Activated CD4-positive, alpha-beta memory T cell treated with anti-CD3 and anti-CD28 coated beads for 36 hours (primary cell): ENCODE measurements at regions of chr14 and their contacts with region 1.

Region 1: GRCh38 chr14:70907176-70907995 is at the start of gene PCNX1:
- DNase-seq: peak; percentile 90
- H3K4me3 Mint-ChIP-seq: peak within 1 kb of the TSS; percentile 97
- H3K27ac Mint-ChIP-seq: peak within 1 kb of the TSS; percentile 86
- H3K4me1 Mint-ChIP-seq: peaks cover 72% of the 10 kb centered on the region
- H3K27me3 Mint-ChIP-seq: no peaks in the 10 kb centered on the region
- total RNA-seq, gene PCNX1: 39.2 to 44.4 TPM

Region 2: DNA sequence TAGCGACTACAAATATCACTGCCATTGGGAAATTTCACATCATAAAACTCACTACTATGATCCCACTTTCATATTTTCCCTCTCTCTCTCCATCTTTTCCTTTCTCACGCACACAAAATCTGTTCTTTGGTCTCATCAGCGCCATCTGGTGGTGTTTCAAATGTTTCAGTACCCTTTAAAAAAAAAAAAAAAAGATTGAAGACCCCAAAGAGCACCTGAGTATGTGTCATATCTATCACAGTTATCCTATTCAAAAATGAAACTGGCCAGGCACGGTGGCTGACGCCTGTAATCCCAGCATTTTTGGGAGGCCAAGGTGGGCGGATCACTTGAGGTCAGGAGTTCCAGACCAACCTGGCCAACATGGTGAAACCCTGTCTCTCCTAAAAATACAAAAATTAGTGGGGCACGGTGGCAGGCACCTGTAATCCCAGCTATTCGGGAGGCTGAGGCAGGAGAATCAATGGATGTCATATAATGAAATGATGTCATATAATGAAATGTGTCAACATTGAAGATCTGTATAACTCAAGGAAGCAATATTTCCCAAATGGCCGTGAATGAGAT is 193.2 kb before region 1 on chr14:
- CTCF ChIA-PET with region 1: no interaction called
- POLR2A ChIA-PET with region 1: no interaction called
- intact Hi-C with region 1: no loop called
- DNase-seq: peak; percentile 32
- H3K4me3 Mint-ChIP-seq: no peak overlapping the region
- H3K27ac Mint-ChIP-seq: no peak overlapping the region
- H3K4me1 Mint-ChIP-seq: peaks cover 3% of the 10 kb centered on the region
- H3K27me3 Mint-ChIP-seq: no peaks in the 10 kb centered on the region

Region 3: GRCh38 chr14:70735043-70735442 is 172.3 kb before region 1 on chr14:
- CTCF ChIA-PET with region 1: no interaction called
- POLR2A ChIA-PET with region 1: no interaction called
- intact Hi-C with region 1: no loop called
- DNase-seq: no peak
- H3K4me3 Mint-ChIP-seq: no peak overlapping the region
- H3K27ac Mint-ChIP-seq: no peak overlapping the region
- H3K4me1 Mint-ChIP-seq: no peaks in the 10 kb centered on the region
- H3K27me3 Mint-ChIP-seq: no peaks in the 10 kb centered on the region

Region 4: DNA sequence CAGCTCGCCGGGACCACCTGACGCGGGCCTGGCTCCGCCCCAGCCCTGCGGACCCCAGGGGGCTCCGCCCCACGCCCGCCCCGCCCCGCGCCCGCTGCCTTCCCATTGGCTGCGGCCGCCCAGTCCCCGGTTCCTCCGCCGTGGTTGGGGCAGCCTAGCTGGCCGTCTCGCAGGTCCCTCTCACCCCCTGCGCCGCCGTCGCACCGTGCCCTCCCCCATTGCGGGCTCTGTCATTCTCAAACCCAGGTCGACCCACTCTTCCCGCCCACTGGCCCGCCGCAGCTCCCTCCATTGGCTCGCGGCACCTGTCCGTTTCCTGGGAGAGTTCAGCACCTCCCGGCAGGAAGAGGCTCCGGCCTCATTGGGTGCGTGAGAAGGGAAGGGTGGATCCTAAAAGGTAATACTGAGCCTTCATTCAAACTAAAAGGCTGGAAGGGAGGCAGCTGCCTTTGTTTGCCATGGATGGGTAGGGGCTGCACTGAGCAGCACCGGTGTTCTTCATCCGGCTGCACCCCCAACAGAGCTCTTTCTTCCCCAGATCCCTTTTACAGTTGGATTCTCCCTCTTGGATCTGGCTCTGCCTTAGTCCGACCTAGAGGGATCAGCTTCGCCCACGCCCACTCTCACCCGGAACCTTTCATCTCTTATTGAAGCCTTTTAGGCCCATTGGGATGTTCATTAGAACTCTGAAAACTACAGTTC is 97.7 kb before region 1 on chr14:
- CTCF ChIA-PET with region 1: interaction called, 11 read pairs
- POLR2A ChIA-PET with region 1: interaction called, 7 read pairs
- intact Hi-C with region 1: no loop called
- DNase-seq: peak; percentile 96
- H3K4me3 Mint-ChIP-seq: no peak overlapping the region
- H3K27ac Mint-ChIP-seq: no peak overlapping the region
- H3K4me1 Mint-ChIP-seq: peaks cover 6% of the 10 kb centered on the region
- H3K27me3 Mint-ChIP-seq: no peaks in the 10 kb centered on the region

Region 5: DNA sequence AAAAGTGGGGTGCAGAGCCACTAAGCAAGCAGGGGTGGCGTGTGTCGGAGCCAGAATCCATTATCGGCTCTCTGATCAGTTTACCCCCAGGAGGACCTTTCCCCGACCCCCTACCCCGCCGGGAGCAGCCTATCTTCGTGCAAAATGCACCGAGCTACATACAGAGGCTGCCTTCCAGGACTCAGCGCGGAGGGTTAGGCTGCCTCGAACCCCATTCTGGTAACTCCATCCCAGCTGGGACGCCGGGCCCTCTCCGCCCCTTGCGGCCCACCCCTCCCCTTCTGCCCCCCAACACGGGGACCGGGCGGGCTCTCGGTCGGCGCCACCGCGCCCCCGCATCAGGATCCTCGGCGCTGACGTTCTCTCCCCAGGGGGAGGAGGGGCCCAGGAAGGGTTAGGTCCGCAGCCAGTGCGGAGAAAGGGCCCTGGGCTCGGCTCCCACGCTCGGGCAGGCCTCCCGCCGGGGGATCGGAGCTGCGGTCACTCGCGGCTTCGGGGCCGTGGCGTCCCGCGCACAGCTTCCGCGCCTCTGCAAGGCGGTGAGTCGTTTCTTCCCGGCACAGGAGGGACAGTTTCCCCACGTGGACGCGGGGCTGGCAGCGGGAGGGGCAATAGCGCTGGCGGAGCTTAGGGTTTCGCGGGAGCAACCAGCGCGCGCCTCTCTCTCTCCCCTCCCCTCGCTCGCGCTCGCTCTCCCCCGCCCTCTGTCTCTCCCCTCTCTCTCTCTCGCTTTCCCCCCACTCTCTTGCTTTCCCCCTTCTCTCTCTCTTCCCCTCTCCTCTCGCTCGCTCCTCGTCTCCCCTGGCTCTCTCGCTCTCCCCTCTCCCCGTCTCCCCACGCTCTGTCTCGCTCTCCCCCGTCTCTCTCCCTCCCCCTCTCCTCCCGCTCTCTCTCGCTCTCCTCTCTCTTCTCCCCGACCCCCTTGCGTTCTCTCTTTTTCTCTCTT is 85.5 kb before region 1 on chr14:
- CTCF ChIA-PET with region 1: interaction called, 42 read pairs
- POLR2A ChIA-PET with region 1: interaction called, 7 read pairs
- intact Hi-C with region 1: loop called (anchors 2 kb)
- DNase-seq: peak; percentile 80
- H3K4me3 Mint-ChIP-seq: peak overlapping the region; percentile 76
- H3K27ac Mint-ChIP-seq: no peak overlapping the region
- H3K4me1 Mint-ChIP-seq: peaks cover 12% of the 10 kb centered on the region
- H3K27me3 Mint-ChIP-seq: peaks cover 9% of the 10 kb centered on the region

Region 6: GRCh38 chr14:70887207-70887681 is 20.1 kb before region 1 on chr14:
- CTCF ChIA-PET with region 1: interaction called, 199 read pairs
- POLR2A ChIA-PET with region 1: interaction called, 35 read pairs
- intact Hi-C with region 1: loop called (anchors 1 kb)
- DNase-seq: peak; percentile 25
- H3K4me3 Mint-ChIP-seq: peak overlapping the region; percentile 49
- H3K27ac Mint-ChIP-seq: peak overlapping the region; percentile 85
- H3K4me1 Mint-ChIP-seq: peaks cover 82% of the 10 kb centered on the region
- H3K27me3 Mint-ChIP-seq: no peaks in the 10 kb centered on the region

Region 7: DNA sequence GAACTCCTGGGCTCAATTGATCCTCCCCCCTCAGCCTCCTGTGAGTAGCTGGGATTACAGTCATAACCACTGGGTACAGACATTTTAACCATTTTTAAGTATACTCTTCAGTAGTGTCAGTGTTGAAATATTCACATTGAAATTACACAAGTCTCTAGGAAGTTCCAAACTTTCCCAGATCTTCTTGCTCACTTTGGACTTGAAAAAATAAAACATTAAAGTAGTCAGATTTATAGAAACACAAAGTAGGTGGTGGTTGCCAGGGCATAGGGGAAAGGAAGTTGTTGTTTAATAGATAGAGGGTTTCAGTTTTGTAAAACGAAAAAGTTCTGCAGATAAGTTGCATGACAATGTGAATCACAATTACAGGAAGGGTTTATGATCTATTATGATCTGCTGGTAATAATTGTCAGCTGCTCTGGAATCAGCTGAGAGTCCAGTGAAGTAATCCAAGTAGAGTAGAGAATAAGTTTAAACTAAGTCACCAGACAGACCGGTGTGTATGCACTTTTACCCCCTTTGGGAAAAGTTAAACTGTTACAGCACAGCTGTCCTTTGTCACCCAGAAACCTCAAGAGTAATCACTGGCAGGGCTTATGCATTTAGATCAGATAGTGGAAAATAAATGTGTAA is 27.2 kb after region 1 on chr14:
- CTCF ChIA-PET with region 1: interaction called, 25 read pairs
- POLR2A ChIA-PET with region 1: interaction called, 6 read pairs
- intact Hi-C with region 1: loop called (anchors 1 kb)
- DNase-seq: peak; percentile 44
- H3K4me3 Mint-ChIP-seq: peak overlapping the region; percentile 62
- H3K27ac Mint-ChIP-seq: peak overlapping the region; percentile 88
- H3K4me1 Mint-ChIP-seq: peaks cover 78% of the 10 kb centered on the region
- H3K27me3 Mint-ChIP-seq: no peaks in the 10 kb centered on the region

Region 8: DNA sequence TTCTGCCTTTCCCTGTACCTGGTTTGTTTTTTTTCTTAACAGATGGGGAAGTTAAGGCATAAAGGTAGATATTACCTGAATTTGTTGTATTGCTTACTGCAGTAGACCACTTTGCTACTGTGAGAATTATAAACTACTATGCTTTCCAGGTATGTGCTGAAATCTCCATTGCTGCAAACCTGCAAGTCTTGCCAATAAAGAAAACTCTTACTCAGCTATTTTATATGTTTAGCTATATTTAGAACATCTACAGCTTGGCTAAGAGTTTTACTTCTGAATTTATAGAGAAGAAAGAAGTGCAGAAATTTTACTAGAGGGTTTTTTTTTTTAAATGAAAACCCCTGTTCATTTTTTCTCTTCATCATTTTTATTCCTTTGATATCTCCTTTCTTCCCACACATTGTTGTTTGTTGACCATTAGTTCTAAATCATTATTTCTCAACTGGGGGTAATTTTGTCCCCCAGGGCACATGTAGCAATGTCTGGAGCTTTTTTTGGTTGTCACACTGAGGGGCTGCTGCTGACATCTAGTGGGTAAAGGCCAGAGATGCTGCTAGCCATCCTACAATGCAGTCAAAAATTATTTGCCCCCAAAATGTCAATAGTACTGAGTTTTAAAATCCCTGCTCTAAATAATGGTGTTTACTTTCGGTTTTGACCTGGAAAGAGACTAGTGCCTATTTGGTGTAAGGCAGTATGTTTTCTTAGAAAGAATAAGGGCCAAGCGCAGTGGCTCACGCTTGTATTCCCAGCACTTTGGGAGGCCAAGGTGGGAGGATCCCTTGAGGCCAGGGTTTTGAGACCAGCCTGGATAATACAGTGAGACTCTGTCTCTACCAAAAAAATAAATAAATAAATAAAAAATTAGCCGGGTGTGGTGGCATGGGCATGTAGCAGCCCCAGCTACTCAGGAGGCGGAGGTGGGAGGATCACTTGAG is 48.4 kb after region 1 on chr14:
- CTCF ChIA-PET with region 1: interaction called, 124 read pairs
- POLR2A ChIA-PET with region 1: no interaction called
- intact Hi-C with region 1: loop called (anchors 1 kb)
- DNase-seq: peak; percentile 57
- H3K4me3 Mint-ChIP-seq: no peak overlapping the region
- H3K27ac Mint-ChIP-seq: no peak overlapping the region
- H3K4me1 Mint-ChIP-seq: peaks cover 45% of the 10 kb centered on the region
- H3K27me3 Mint-ChIP-seq: no peaks in the 10 kb centered on the region

Region 9: GRCh38 chr14:70981000-70981952 is 73.9 kb after region 1 on chr14:
- CTCF ChIA-PET with region 1: interaction called, 37 read pairs
- POLR2A ChIA-PET with region 1: no interaction called
- intact Hi-C with region 1: no loop called
- DNase-seq: no peak
- H3K4me3 Mint-ChIP-seq: peak overlapping the region; percentile 50
- H3K27ac Mint-ChIP-seq: peak overlapping the region; percentile 85
- H3K4me1 Mint-ChIP-seq: peaks cover 52% of the 10 kb centered on the region
- H3K27me3 Mint-ChIP-seq: no peaks in the 10 kb centered on the region